Panc1 (cell line): ENCODE measurements at regions of chr22 and their contacts with region 1.

Region 1: DNA sequence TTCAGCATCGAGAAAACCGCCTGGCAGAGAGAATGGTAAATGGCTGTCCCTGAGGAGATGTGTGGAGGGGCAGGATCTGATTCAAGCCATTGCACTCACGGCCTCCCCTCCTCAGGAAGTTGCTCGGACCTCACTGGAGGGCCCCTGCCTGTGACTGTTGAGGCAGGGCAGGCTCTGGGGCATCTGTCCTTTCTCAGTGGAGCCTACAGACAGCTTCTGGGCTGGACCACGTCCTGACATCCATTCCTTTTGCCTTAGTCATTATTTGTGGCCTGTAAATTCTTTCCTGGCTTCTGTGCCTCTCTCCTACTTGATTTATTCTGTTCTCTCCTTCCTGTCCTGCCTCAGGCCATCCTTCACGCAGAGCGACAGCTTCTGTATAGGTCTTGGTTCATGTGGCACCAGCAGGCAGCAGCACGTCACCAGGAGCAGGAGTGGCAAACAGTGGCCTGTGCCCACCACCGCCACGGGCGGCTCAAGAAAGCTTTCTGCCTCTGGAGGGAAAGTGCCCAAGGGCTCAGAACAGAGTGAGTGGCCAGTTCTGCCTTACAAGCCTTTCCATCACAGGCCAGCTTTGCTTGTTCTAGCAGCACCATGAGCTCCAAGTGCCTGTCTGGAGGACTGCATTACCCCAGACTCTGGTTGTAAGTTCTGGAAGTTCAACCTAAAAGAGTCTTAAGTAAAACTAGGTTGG is 59.6 kb downstream of the PISD start:
- DNase-seq: no peak
- ATAC-seq: peak; percentile 72
- H3K4me3 ChIP-seq: no peak overlapping the region
- H3K27ac ChIP-seq: no peak overlapping the region
- H3K4me1 ChIP-seq: peaks cover 5% of the 10 kb centered on the region; the same call in 1 of the 2 replicates
- H3K27me3 ChIP-seq: no peaks in the 10 kb centered on the region
- CTCF ChIP-seq: no peak

Region 2: DNA sequence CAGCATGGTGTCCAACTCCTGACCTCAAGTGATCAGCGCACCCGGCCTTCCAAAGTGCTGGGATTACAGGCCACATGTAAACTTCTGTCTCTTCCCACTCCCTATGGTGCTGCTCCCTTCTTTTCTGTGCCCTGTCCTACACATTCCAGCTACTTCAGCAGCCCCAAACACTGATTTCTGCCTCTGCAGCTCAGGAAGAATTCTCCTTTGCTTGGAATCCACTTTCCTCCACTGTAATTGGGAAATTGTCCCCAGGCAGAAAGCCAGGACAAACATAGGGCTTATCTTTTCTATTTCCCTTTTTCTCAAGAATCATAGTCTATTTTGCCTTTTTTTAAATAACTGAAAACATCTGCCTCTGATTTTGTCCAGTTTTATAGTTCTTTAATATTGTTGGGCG is 224.3 kb before region 1 on chr22:
- CTCF ChIA-PET with region 1: no interaction called
- POLR2A ChIA-PET with region 1: interaction called, 11 read pairs
- in situ Hi-C with region 1: no loop called
- intact Hi-C with region 1: no loop called
- DNase-seq: no peak
- ATAC-seq: no peak
- H3K4me3 ChIP-seq: no peak overlapping the region
- H3K27ac ChIP-seq: no peak overlapping the region
- H3K4me1 ChIP-seq: no peaks in the 10 kb centered on the region
- H3K27me3 ChIP-seq: no peaks in the 10 kb centered on the region
- CTCF ChIP-seq: no peak